ENCODE measurements at regions of chr10 and their contacts with region 1.

Region 1: DNA sequence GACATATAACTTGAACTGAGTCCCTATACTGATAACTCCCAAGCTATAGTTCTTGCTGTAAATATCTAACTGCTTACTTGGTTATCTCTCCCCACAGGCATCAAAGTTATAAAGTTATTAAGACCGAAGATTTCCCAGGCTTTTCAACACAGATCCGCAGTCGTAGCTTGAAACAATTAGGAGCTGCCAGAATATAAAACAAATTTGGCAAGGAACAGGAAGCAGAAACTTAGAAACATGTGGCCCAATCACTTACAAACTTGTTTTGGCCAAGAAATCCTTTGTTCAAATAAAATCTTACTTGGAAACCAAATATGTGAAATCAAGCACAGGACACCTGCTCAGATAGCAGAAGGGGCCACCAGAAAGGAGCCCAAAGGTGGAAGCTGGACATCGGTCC is 9.0 kb downstream of the SLC16A12 start:
- DNase-seq: no peak
- H3K4me3 ChIP-seq: no peak overlapping the region
- H3K27me3 ChIP-seq: no peaks in the 10 kb centered on the region
- CTCF ChIP-seq: no peak

Region 2: DNA sequence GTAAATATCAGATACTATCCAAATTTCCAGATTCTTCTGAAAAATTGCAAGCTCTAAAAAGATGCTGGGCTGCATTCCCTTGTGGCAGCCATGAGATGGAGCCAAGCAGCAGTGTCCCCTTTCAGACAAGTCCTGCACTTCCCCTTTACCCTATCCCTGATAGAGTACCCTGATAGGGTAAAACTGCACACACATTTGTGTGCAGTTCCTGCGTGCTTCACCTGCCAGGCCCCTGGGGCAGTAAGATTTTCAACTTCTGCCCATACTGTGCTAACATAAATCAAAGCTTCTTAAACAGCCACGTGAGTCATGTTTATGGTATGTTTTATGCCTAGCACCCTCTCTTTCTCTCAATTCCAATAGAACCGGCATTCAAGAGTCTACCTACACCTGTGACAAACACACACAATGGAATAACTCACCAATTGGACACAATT is 59.7 kb before region 1 on chr10:
- CTCF ChIA-PET with region 1: interaction called, 10 read pairs
- POLR2A ChIA-PET with region 1: no interaction called
- DNase-seq: no peak
- H3K4me3 ChIP-seq: no peak overlapping the region
- H3K27me3 ChIP-seq: no peaks in the 10 kb centered on the region
- CTCF ChIP-seq: peak; percentile 67

Region 3: DNA sequence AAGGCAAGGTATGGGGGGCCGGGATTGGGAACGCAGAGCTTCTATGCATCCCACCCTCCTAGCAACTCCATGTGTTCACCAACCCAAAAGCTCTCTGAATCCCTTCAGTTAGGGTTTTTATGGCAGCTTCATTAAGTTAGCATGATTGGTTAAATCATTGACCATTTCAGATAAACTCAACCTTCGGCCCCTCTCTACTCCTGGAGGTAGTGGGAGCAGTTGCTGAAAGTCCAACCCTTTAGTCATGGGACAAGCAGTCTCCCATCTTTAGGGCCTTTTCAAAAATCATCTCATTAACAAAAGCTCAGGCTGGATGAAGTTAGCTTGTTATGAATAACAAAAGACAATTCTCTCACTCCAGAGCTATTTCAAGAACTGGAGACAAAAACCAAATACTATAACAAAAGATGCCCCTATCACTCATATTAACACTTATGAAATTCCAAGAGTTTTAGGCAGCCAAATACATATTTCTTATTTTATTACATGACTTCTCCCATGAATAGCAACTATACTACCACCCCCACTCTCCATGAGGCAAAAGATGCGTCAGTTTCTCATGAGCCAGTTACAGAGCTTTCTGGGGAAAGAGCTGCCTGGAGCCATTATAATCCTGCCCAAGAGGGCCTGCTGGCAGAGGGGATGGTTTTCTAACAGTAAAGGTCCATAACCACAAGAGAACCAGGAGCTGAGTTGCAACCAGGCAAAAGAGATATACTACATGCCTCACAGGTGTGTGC is 35.6 kb before region 1 on chr10:
- CTCF ChIA-PET with region 1: no interaction called
- POLR2A ChIA-PET with region 1: no interaction called
- DNase-seq: no peak
- H3K4me3 ChIP-seq: no peak overlapping the region
- H3K27me3 ChIP-seq: no peaks in the 10 kb centered on the region
- CTCF ChIP-seq: no peak

Region 4: DNA sequence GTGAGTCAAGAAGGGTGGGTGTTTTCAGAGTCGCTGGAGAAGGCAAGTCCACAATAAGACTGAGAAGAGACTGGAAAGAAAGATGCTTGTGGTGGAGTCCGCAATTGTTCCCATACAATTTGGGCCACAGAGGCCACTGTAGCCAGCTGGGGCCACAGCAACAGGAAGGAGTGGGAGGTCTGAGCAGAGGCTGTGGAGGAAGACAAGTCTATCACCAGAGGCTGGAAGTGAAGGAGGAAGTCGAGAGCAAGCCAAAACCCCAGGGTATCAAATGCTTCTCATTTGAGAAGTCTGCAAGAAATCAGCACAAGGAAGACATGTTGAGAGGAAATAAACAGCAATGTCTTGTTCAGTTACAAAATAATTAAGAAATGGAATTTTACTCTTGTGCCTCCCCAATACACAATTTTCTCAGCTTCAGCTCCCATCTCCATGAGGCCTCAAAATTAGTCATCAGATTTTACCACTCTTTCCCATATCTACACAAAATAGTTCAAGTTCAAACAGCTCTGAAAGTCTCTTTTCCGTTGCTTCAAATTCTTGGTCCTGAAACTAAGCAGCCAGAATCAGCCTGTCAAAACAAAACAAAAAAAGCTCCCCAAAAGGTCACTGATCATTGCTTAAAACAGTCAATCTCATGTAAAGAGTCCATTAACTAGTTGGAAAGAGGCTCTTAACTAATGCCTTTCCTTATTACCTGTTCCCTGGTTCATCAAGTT is 22.5 kb before region 1 on chr10:
- CTCF ChIA-PET with region 1: no interaction called
- POLR2A ChIA-PET with region 1: no interaction called
- DNase-seq: no peak
- H3K4me3 ChIP-seq: no peak overlapping the region
- H3K27me3 ChIP-seq: no peaks in the 10 kb centered on the region; the same call in 1 of the 2 replicates
- CTCF ChIP-seq: no peak